T-cell (primary cell): ENCODE measurements at regions of chr12 and their contacts with region 1.

Region 1: GRCh38 chr12:1013618-1014489 is 22.8 kb downstream of the ERC1 start:
- DNase-seq: no peak
- ATAC-seq: no peak
- H3K4me3 ChIP-seq: no peak overlapping the region
- H3K4me3 Mint-ChIP-seq: no peak overlapping the region
- H3K27ac ChIP-seq: no peak overlapping the region
- H3K27ac Mint-ChIP-seq: no peak overlapping the region
- H3K4me1 ChIP-seq: no peaks in the 10 kb centered on the region
- H3K4me1 Mint-ChIP-seq: peaks cover 4 to 10% (median 9%) of the 10 kb centered on the region in 3 donors
- H3K27me3 ChIP-seq: no peaks in the 10 kb centered on the region
- H3K27me3 Mint-ChIP-seq: no peaks in the 10 kb centered on the region

Region 2: GRCh38 chr12:510071-510825 is 503.6 kb before region 1 on chr12:
- CTCF ChIA-PET with region 1: no interaction called
- POLR2A ChIA-PET with region 1: no interaction called
- DNase-seq: no peak
- ATAC-seq: no peak
- H3K4me3 ChIP-seq: no peak overlapping the region
- H3K4me3 Mint-ChIP-seq: no peak overlapping the region
- H3K27ac ChIP-seq: no peak overlapping the region
- H3K27ac Mint-ChIP-seq: no peak overlapping the region
- H3K4me1 ChIP-seq: no peaks in the 10 kb centered on the region
- H3K4me1 Mint-ChIP-seq: peaks cover 0 to 3% (median 0%) of the 10 kb centered on the region in 3 donors
- H3K27me3 ChIP-seq: peaks cover 0 to 10% of the 10 kb centered on the region in 2 experiments
- H3K27me3 Mint-ChIP-seq: peaks cover 12 to 13% of the 10 kb centered on the region in 2 donors

Region 3: DNA sequence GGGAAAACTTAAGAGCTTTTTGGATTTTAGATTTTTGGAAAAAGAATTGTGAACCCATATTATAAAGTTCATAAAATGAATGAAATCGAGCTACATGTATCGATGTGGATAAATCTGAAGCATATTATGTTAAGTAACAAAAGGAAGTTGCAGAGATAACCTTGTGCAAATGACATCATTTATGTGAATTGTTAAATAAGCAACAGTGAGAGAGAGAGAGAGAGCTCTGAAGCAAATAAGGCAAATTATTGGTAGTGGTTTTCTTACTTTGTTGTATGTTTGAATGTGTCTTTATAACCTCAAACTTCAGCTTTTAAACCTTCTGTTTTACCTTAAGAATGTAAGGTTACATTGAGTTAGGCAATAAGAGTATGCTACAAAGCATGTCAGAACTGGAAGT is 56.0 kb after region 1 on chr12:
- CTCF ChIA-PET with region 1: no interaction called
- POLR2A ChIA-PET with region 1: interaction called in 1 of 2 experiments, 10 read pairs
- DNase-seq: no peak
- ATAC-seq: no peak
- H3K4me3 ChIP-seq: no peak overlapping the region
- H3K4me3 Mint-ChIP-seq: no peak overlapping the region
- H3K27ac ChIP-seq: no peak overlapping the region
- H3K27ac Mint-ChIP-seq: no peak overlapping the region
- H3K4me1 ChIP-seq: no peaks in the 10 kb centered on the region
- H3K4me1 Mint-ChIP-seq: peaks cover 14 to 26% (median 23%) of the 10 kb centered on the region in 3 donors
- H3K27me3 ChIP-seq: no peaks in the 10 kb centered on the region
- H3K27me3 Mint-ChIP-seq: no peaks in the 10 kb centered on the region